SK-N-SH (cell line): ENCODE measurements at regions of chr1 and their contacts with region 1.

Region 1: DNA sequence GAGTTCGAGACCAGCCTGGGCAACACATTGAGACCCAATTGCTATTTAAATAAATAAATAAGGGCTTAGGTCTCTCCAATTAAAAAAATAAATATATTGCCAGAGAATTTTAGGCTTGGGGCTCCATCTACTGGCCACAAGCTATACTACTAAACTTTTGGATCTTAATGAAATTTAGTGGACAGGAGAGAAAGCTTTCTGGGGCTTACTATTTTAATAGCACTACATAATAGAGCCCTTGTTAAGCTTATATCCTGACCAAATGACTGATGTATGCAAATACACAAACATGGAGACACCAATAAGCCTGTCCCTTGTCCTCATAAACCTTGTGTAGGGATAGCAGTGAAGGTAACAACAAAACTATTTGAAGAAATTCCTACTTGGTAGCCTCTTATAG is 18.4 kb downstream of the CCT3 start:
- DNase-seq: peak; percentile 43
- H3K4me3 ChIP-seq: no peak overlapping the region
- H3K27ac ChIP-seq: 0 out of 4 replicates have a peak overlapping the region, but pooled peaks of 1 of the 2 experiments have one; percentile 16
- H3K4me1 ChIP-seq: no peaks in the 10 kb centered on the region
- H3K27me3 ChIP-seq: no peaks in the 10 kb centered on the region
- CTCF ChIP-seq: peak; percentile 79
- EP300 ChIP-seq: no peak
- RAD21 ChIP-seq: peak; percentile 64

Region 2: GRCh38 chr1:155513300-155513916 is 806.3 kb before region 1 on chr1:
- CTCF ChIA-PET with region 1: no interaction called
- POLR2A ChIA-PET with region 1: no interaction called
- DNase-seq: peak; percentile 33
- H3K4me3 ChIP-seq: no peak overlapping the region
- H3K27ac ChIP-seq: peak overlapping the region in 1 of 2 experiments; percentile 26; a peak in 2 of 4 replicates
- H3K4me1 ChIP-seq: peaks cover 0 to under 1% of the 10 kb centered on the region in 2 experiments; a peak in 1 of 4 replicates
- H3K27me3 ChIP-seq: no peaks in the 10 kb centered on the region
- CTCF ChIP-seq: peak; percentile 36; the same call in 1 of the 2 replicates
- EP300 ChIP-seq: no peak
- RAD21 ChIP-seq: no peak

Region 3: GRCh38 chr1:156308078-156308477 is 11.6 kb before region 1 on chr1:
- CTCF ChIA-PET with region 1: interaction called, 10 read pairs
- POLR2A ChIA-PET with region 1: interaction called, 4 read pairs
- DNase-seq: no peak
- H3K4me3 ChIP-seq: no peak overlapping the region
- H3K27ac ChIP-seq: 0 out of 4 replicates have a peak overlapping the region, but pooled peaks of 1 of the 2 experiments have one; percentile 3
- H3K4me1 ChIP-seq: no peaks in the 10 kb centered on the region
- H3K27me3 ChIP-seq: no peaks in the 10 kb centered on the region
- CTCF ChIP-seq: no peak
- EP300 ChIP-seq: no peak
- RAD21 ChIP-seq: no peak

Region 4: DNA sequence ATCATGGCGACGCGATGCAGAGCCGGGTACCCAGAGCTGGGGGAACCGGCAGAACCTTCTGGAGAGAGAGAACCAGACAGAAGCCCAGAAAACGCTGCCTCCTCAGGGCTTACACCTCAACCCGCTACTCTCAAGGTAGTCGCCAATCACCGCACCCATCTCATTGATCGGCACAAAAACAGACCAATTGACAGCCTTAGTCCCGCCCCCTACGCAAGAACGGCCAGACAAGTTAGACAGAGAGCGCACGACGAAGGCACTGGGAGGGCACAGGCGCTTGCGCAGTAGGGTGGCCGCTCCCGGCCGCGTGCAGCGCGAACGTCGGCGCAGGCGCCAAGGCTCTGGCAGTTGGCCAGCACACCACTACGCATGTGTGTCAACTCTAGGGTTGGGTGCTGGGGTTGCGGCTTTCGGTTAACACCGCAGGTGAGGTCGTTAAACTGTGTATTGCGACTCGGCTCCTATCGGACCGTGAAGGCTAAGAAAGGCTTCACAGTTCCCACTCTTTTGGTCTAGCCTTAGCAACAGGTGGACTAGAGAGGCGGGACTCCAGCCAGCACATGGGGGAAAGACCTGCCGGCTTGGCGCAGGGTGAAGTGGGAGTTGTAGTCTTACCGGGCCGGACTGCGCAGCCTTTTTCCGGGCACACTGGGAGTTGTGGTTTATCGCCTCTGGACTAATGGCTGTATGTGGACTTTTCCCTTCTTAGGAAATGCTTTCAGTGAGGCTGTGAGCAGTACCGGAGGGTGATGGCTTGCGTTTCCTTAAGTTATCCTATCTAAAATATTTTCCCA is 18.7 kb after region 1 on chr1 and contains the starts of genes CCT3 and TSACC:
- CTCF ChIA-PET with region 1: interaction called, 11 read pairs
- POLR2A ChIA-PET with region 1: no interaction called
- DNase-seq: peak; percentile 94
- H3K4me3 ChIP-seq: peak within 1 kb of the TSS; percentile 63 to 78
- H3K27ac ChIP-seq: peak within 1 kb of the TSS; percentile 67 to 94
- H3K4me1 ChIP-seq: peaks cover 9 to 12% of the 10 kb centered on the region in 2 experiments; a peak in 3 of 4 replicates
- H3K27me3 ChIP-seq: no peaks in the 10 kb centered on the region
- CTCF ChIP-seq: no peak
- EP300 ChIP-seq: peak in 1 of 2 experiments; percentile 46; a peak in 2 of 4 replicates
- RAD21 ChIP-seq: no peak
- polyA plus RNA-seq, gene CCT3: 295 and 359 TPM in 2 replicates
- polyA plus RNA-seq, gene TSACC: 1.5 TPM in 2 replicates

Region 5: DNA sequence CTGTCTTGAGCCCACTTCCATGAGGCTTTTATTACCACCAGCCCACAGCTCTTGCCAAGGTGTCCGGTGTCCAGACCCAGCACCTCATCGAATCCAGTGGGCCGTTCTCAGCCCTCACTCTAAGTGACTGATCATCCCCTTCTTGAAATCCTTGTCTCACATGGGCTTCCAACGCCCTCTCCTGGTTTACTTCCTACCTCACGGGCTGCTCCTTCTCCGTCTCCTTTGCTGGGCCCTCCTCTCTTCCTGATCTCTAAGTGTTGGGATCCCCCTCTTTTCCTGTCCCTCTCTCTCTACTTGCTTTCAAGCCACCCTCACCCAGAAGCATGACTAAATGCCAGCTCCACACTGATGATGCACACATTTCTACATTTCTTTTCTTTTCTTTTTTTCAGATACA is 40.3 kb after region 1 on chr1:
- CTCF ChIA-PET with region 1: interaction called, 18 read pairs
- POLR2A ChIA-PET with region 1: no interaction called
- DNase-seq: peak; percentile 69
- H3K4me3 ChIP-seq: no peak overlapping the region
- H3K27ac ChIP-seq: no peak overlapping the region
- H3K4me1 ChIP-seq: no peaks in the 10 kb centered on the region; a peak in 1 of 4 replicates
- H3K27me3 ChIP-seq: peaks cover 5% of the 10 kb centered on the region; the same call in 1 of the 2 replicates
- CTCF ChIP-seq: peak; percentile 61
- EP300 ChIP-seq: no peak
- RAD21 ChIP-seq: peak; percentile 84

Region 6: DNA sequence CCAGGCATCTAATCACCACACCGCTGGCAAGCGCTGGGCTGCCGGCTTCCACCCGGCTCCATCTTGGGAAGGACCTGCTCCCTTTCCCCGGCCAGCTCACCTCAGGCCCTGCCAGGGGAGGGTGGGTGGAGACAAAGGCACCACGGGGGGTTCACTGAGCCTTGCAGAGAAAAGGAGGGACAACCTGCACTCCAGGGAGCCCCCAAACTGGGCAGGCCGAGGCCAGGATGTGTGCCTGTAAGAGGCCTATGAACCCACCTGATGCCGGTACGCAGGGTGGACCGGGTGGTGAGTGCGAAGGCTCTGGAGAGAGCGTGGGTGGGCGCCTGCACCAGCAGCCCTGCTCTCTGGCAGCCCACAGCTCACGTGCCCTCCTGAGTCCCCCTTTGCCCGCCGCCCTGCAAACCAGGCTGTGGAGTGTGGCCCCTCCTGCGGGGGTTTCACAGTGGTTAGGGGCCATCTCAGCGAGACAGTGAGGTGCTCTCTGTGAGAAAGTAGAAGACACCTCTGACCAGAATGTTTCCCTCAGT is 71.5 kb after region 1 on chr1:
- CTCF ChIA-PET with region 1: no interaction called
- POLR2A ChIA-PET with region 1: no interaction called
- DNase-seq: no peak
- H3K4me3 ChIP-seq: no peak overlapping the region
- H3K27ac ChIP-seq: no peak overlapping the region
- H3K4me1 ChIP-seq: peaks cover 0 to 6% of the 10 kb centered on the region in 2 experiments; a peak in 1 of 4 replicates
- H3K27me3 ChIP-seq: no peaks in the 10 kb centered on the region; the same call in 1 of the 2 replicates
- CTCF ChIP-seq: no peak
- EP300 ChIP-seq: no peak
- RAD21 ChIP-seq: no peak